ENCODE measurements at regions of chr22 and their contacts with region 1.

Region 1: GRCh38 chr22:37608477-37609239 is at the start of gene GGA1:
- DNase-seq: no peak
- ATAC-seq: peak; percentile 83
- H3K4me3 ChIP-seq: peak within 1 kb of the TSS; percentile 97
- H3K27ac ChIP-seq: peak within 1 kb of the TSS; percentile 87
- H3K4me1 ChIP-seq: peaks cover 17% of the 10 kb centered on the region
- H3K27me3 ChIP-seq: no peaks in the 10 kb centered on the region
- CTCF ChIP-seq: no peak
- EP300 ChIP-seq: peak in 1 of 2 experiments; percentile 44; a peak in 2 of 4 replicates
- POLR2A ChIP-seq: peak; percentile 77
- RAD21 ChIP-seq: no peak
- polyA plus RNA-seq, gene GGA1: 1.4 to 4.8 TPM

Region 2: GRCh38 chr22:37538590-37539357 is 69.9 kb before region 1 on chr22:
- CTCF ChIA-PET with region 1: interaction called, 41 read pairs
- POLR2A ChIA-PET with region 1: interaction called, 7 read pairs
- RAD21 ChIA-PET with region 1: interaction called, 7 read pairs
- SMC1A ChIA-PET with region 1: interaction called, 4 read pairs
- in situ Hi-C with region 1: no loop called
- intact Hi-C with region 1: no loop called
- DNase-seq: peak; percentile 80
- ATAC-seq: peak; percentile 98
- H3K4me3 ChIP-seq: no peak overlapping the region
- H3K27ac ChIP-seq: no peak overlapping the region
- H3K4me1 ChIP-seq: peaks cover 27% of the 10 kb centered on the region
- H3K27me3 ChIP-seq: no peaks in the 10 kb centered on the region
- CTCF ChIP-seq: peak; percentile 96 to 99 (median 96)
- EP300 ChIP-seq: peak in 1 of 2 experiments; percentile 37; a peak in 1 of 4 replicates
- POLR2A ChIP-seq: no peak
- RAD21 ChIP-seq: peak; percentile 96

Region 3: DNA sequence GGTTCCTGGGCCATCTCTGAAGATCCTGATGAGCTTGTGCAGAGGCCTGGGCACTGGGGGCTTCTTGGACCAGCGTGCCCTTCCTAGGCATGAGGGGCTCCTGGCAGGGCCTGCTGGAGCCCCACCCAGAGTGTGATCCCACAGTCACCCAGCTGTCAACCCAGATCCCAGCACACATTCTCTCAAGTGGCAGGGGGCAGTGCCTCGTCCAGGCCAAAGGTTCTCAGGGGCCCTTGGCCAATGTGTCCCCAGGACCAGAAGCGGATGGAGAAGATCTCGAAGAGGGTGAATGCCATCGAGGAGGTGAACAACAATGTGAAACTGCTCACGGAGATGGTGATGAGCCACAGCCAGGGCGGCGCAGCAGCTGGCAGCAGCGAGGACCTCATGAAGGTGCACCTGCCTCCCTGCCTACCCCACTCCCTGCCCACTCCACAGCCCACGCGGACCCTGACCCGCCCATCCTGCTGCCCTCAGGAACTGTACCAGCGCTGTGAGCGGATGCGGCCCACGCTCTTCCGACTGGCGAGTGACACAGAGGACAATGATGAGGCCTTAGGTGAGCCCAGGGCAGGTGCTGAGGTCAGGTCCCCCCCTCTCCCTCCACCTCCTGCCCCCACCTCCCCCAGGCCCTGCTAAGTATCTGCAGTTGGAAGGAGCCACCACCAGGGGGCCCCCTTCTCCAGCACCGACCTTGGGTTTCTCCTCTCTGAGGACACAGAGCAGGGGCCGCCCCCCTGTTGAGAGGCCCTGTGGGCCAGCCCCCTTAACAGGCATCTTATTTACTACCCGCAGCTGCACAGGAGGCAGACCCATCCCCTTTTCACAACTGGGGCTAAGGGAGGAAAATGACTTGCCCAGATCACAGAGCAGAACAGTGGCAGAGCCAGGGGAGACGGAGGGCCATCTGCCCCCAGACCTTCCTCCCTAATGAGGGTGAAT is 14.7 kb after region 1 on chr22:
- CTCF ChIA-PET with region 1: interaction called, 146 read pairs
- POLR2A ChIA-PET with region 1: interaction called, 18 read pairs
- RAD21 ChIA-PET with region 1: interaction called, 10 read pairs
- SMC1A ChIA-PET with region 1: interaction called, 11 read pairs
- in situ Hi-C with region 1: no loop called
- intact Hi-C with region 1: no loop called
- DNase-seq: no peak
- ATAC-seq: peak; percentile 88
- H3K4me3 ChIP-seq: no peak overlapping the region
- H3K27ac ChIP-seq: no peak overlapping the region
- H3K4me1 ChIP-seq: peaks cover 29% of the 10 kb centered on the region
- H3K27me3 ChIP-seq: no peaks in the 10 kb centered on the region
- CTCF ChIP-seq: peak; percentile 68 to 92 (median 74)
- EP300 ChIP-seq: no peak
- POLR2A ChIP-seq: peak; percentile 54
- RAD21 ChIP-seq: peak; percentile 85

Region 4: DNA sequence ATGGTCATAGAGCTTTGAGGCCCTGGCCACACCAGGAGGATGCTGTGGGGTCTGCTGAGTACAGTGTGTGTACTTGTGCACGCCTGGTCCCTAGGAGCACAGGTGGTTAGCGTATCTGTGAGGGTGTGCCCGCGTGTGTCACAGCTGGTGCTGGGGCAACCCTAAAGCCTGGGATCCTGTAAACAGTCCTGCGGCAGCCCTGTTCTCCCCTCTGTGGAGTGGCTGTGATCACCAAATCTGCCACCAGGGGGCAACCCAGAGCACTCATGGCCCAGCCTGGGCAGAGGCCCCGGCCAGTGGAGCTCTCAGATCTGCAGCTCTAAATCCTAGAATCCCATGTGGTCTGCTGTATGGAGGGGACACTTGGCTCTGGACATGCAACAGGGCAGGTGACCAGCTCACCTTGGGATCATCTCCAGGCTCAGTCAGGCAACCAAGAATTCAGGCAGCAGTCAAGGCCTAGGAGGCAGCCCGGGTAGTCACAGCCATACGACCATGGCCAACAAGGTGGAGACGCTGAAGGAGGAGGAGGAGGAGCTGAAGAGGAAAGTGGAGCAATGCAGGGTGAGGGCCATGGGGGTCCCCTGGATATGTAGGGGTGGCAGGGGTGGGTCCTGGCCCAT is 34.7 kb after region 1 on chr22:
- CTCF ChIA-PET with region 1: interaction called, 125 read pairs
- POLR2A ChIA-PET with region 1: interaction called, 67 read pairs
- RAD21 ChIA-PET with region 1: interaction called, 50 read pairs
- SMC1A ChIA-PET with region 1: interaction called, 36 read pairs
- in situ Hi-C with region 1: no loop called
- intact Hi-C with region 1: no loop called
- DNase-seq: no peak
- ATAC-seq: peak; percentile 79
- H3K4me3 ChIP-seq: no peak overlapping the region
- H3K27ac ChIP-seq: no peak overlapping the region
- H3K4me1 ChIP-seq: peaks cover 28% of the 10 kb centered on the region
- H3K27me3 ChIP-seq: no peaks in the 10 kb centered on the region
- CTCF ChIP-seq: peak; percentile 86 to 92 (median 89)
- EP300 ChIP-seq: no peak
- POLR2A ChIP-seq: no peak
- RAD21 ChIP-seq: peak; percentile 62

Region 5: GRCh38 chr22:37686002-37686982 is 77.6 kb after region 1 on chr22 and contains the start of gene NOL12:
- CTCF ChIA-PET with region 1: interaction called, 178 read pairs
- POLR2A ChIA-PET with region 1: interaction called, 11 read pairs
- RAD21 ChIA-PET with region 1: interaction called, 45 read pairs
- SMC1A ChIA-PET with region 1: interaction called, 16 read pairs
- in situ Hi-C with region 1: no loop called
- intact Hi-C with region 1: loop called (anchors 1 kb)
- DNase-seq: peak; percentile 72
- ATAC-seq: peak; percentile 90
- H3K4me3 ChIP-seq: peak within 1 kb of the TSS; percentile 100
- H3K27ac ChIP-seq: peak within 1 kb of the TSS; percentile 89
- H3K4me1 ChIP-seq: peaks cover 17% of the 10 kb centered on the region
- H3K27me3 ChIP-seq: no peaks in the 10 kb centered on the region
- CTCF ChIP-seq: 0 out of 6 replicates have a peak, but pooled peaks of 1 of the 3 experiments have one; percentile 5
- EP300 ChIP-seq: no peak
- POLR2A ChIP-seq: peak; percentile 86
- RAD21 ChIP-seq: no peak
- polyA plus RNA-seq, gene NOL12: 3.3 to 12.9 TPM

Region 6: DNA sequence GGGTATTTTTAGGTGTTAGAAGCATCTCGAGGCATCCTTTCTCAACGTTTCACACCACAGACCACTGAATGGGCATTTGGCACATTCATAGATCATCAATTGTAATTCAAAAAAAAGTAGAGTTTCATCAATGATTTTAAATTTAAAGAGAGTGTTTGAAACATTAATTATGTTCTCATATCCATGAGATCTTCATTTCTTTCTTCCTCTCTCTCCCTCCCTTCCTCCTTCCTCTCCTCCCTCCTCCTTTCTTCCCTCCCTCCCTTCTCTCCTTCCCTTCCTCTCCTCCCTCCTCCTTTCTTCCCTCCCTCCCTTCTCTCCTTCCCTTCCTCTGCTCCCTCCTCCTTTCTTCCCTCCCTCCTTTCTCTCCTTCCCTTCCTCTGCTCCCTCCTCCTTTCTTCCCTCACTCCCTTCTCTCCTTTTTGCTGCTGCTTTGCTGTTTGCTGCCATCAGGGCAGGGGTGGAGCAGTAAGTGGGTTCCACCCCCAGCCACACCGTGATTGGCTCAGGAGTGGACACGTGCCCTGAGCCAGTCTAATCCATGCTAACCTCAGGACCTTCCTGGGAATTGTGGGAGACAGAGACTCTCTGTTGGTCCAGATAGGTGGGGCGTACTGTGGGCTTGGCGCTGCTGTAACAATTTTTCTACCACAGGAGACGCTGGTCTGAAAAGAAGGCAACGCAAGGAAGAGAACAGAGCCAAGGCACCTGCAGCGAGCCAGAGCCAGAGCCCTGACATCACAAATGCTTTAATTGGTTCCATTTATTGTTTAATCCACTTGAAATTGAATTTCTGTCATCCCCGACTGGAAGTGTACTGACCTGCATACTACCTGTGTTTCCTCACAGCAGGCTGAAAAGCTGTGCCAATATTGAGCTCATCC is 1315.0 kb after region 1 on chr22:
- CTCF ChIA-PET with region 1: no interaction called
- POLR2A ChIA-PET with region 1: no interaction called
- RAD21 ChIA-PET with region 1: no interaction called
- SMC1A ChIA-PET with region 1: no interaction called
- in situ Hi-C with region 1: no loop called
- intact Hi-C with region 1: no loop called
- DNase-seq: no peak
- ATAC-seq: no peak
- H3K4me3 ChIP-seq: no peak overlapping the region
- H3K27ac ChIP-seq: no peak overlapping the region
- H3K4me1 ChIP-seq: no peaks in the 10 kb centered on the region
- H3K27me3 ChIP-seq: peaks cover 1 to 7% of the 10 kb centered on the region in 2 experiments; a peak in 2 of 4 replicates
- CTCF ChIP-seq: no peak
- EP300 ChIP-seq: no peak
- POLR2A ChIP-seq: no peak
- RAD21 ChIP-seq: no peak

Measured in GM12878 (cell line).